ENCODE measurements at regions of chr6 and their contacts with region 1.

Region 1: DNA sequence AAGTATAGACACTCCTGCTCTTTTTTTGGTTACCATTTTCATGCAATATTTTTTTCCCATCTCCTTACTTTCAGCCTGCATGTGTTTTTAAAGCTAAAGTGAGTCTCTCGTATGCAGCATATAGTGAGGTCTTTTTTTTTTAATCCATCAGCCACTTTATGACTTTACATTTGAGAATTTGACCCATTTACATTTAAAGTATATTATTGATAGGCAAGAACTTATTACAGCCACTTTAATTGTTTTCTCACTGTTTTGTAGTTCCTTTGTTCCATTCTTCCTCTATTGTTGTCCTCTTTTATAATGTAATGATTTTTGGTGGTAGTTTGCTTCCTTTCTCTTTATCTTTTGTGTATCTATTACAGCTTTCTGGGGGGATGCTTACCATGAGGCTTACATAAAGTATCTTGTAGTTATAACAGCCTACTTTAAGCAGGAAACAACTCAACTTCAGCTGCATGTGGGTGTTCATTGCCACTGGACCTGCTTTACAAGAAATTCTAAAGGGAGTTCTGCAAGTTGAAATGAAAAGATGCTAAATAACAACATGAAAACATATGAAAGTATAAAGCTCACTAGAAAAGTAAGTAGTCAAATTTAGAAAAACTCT is 71.8 kb downstream of the TNFAIP3 start:
- DNase-seq: no peak
- H3K4me3 ChIP-seq: no peak overlapping the region
- H3K27me3 ChIP-seq: no peaks in the 10 kb centered on the region
- CTCF ChIP-seq: no peak

Region 2: DNA sequence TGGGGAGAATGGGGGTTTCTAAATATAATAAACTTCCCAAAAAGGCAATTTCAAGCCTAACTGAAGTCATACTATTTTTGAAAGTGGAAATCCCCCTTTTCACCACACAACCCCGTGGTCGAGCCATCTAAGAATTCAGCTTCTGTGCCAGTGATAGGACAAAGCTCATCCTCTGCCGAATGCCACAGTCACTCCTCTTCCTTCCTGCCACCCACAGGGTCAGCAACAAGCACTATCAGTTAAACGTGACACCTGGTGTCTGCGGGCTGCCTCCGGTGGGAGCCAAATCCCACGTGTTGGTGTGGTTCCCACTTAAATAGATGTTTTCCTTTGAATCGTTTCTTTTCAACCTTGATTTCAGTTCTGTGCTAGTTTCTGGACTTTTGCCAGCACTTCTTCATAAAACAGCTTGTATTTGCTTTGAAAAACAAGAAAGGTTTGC is 11.1 kb before region 1 on chr6:
- CTCF ChIA-PET with region 1: interaction called, 17 read pairs
- POLR2A ChIA-PET with region 1: no interaction called
- DNase-seq: no peak
- H3K4me3 ChIP-seq: no peak overlapping the region
- H3K27me3 ChIP-seq: no peaks in the 10 kb centered on the region
- CTCF ChIP-seq: no peak

Measured in BJ (cell line).